PC-3 (cell line): ENCODE measurements at regions of chr12 and their contacts with region 1.

Region 1: GRCh38 chr12:62123721-62124203 is 136.4 kb upstream of the USP15 start:
- DNase-seq: peak; percentile 57
- ATAC-seq: peak; percentile 59
- H3K4me3 ChIP-seq: no peak overlapping the region
- H3K27ac ChIP-seq: no peak overlapping the region
- H3K4me1 ChIP-seq: 0 out of 2 replicates have a peak, but pooled peaks cover 3% of the 10 kb centered on the region
- H3K27me3 ChIP-seq: peaks cover 26% of the 10 kb centered on the region; the same call in 1 of the 2 replicates
- CTCF ChIP-seq: peak; percentile 76

Region 2: GRCh38 chr12:62006076-62006732 is 117.6 kb before region 1 on chr12:
- CTCF ChIA-PET with region 1: interaction called, 5 read pairs
- POLR2A ChIA-PET with region 1: no interaction called
- intact Hi-C with region 1: loop called (anchors 10 kb)
- DNase-seq: peak; percentile 63
- ATAC-seq: no peak
- H3K4me3 ChIP-seq: no peak overlapping the region
- H3K27ac ChIP-seq: no peak overlapping the region
- H3K4me1 ChIP-seq: no peaks in the 10 kb centered on the region
- H3K27me3 ChIP-seq: no peaks in the 10 kb centered on the region
- CTCF ChIP-seq: peak; percentile 80

Region 3: GRCh38 chr12:62192180-62192902 is 68.6 kb after region 1 on chr12:
- CTCF ChIA-PET with region 1: no interaction called
- POLR2A ChIA-PET with region 1: no interaction called
- intact Hi-C with region 1: loop called (anchors 2 kb)
- DNase-seq: peak; percentile 85
- ATAC-seq: peak; percentile 89
- H3K4me3 ChIP-seq: peak overlapping the region; percentile 61
- H3K27ac ChIP-seq: no peak overlapping the region
- H3K4me1 ChIP-seq: peaks cover 23% of the 10 kb centered on the region
- H3K27me3 ChIP-seq: peaks cover 19% of the 10 kb centered on the region
- CTCF ChIP-seq: peak; percentile 88